Esophagus muscularis mucosa (tissue), 4 donors: ENCODE measurements at regions of chr11 and their contacts with region 1.

Region 1: DNA sequence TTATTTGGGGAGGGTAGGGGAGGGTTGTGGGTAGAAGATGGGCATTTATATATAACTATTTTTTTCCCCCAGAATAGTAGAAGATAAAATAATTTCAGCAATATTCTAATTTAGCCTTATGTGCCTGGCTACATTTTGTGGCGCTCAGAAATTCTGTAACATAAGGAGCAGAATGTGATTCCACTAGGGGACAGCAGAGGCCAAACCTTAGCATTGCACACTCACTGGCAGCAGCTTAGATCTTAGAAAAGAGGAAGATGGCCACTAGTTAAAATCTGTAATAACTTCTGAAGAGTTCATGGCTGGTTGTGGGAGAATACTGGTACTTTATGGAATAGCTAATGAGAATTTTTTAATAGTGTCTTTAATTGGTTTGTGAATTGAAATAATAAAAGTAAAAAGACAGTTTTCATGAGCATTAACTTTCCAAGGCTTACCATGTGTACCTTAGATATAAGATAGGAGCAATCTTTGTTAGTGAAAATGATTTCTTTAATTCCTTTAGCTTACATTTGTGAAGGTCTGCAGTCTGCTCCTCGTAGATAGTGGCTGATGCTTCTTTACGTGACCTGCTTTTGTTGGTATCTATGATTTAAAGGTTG is 33.1 kb downstream of the DDX10 start:
- DNase-seq: no peak
- H3K4me3 ChIP-seq: no peak overlapping the region
- H3K27ac ChIP-seq: no peak overlapping the region
- H3K4me1 ChIP-seq: no peaks in the 10 kb centered on the region
- H3K27me3 ChIP-seq: no peaks in the 10 kb centered on the region
- CTCF ChIP-seq: peak; percentile 79 to 85 (median 85)
- EP300 ChIP-seq: no peak
- POLR2A ChIP-seq: no peak

Region 2: DNA sequence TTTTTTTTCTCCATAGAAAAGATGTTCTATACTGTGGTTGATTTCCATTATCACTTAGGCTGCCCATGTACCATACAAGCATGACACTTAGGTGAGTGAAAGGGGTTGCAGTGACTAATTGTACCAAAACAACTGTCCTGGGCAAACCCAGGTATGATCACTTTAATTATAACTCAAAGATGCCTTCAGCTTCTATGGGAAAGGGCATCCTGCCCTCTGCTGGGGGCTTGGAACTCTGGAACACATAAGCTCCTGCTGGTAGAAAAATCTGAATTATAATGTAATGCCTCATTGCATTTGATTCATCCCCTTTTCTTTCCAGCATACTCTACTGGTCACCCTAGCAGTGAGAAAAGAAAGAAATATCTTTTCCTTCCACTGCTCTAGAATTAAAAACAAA is 173.2 kb after region 1 on chr11:
- intact Hi-C with region 1: loop called (anchors 10 kb)
- DNase-seq: no peak
- H3K4me3 ChIP-seq: no peak overlapping the region
- H3K27ac ChIP-seq: no peak overlapping the region
- H3K4me1 ChIP-seq: peaks cover 5 to 19% (median 16%) of the 10 kb centered on the region in 4 donors
- H3K27me3 ChIP-seq: no peaks in the 10 kb centered on the region
- CTCF ChIP-seq: peak; percentile 36 to 48 (median 42)
- EP300 ChIP-seq: no peak
- POLR2A ChIP-seq: no peak

Region 3: DNA sequence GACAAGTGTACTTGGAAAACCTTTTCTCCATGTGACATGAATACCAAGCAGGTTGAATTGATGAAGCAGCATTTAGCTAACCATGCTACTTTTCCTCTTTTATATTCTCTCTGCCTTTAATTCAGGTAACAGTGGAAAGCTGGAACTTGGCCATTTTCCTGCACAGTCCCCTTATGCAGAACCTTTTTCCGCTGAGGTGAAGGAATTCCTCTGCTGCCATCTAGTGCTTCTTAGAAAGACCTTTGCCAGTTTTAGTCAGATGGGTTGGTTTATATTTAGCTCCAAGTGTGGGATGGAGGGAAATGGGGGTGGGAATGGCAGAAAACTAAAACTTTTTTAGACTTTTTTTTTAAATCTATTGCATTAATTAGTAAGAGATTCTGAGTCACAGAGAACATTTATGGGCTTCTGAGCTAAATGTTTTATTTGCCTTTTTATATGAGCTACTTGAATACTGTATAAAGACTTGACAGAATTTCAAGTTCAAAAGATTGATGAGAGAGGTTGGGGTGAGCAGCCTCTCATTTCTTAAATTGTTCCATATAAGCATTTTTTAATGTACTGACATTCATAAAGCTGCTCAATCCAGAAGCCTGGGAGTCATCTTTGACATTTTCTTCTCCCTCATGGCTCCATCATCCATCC is 1241.3 kb after region 1 on chr11:
- intact Hi-C with region 1: loop called (anchors 5 kb)
- DNase-seq: no peak
- H3K4me3 ChIP-seq: no peak overlapping the region
- H3K27ac ChIP-seq: no peak overlapping the region
- H3K4me1 ChIP-seq: peaks cover 0 to 4% (median 0%) of the 10 kb centered on the region in 4 donors
- H3K27me3 ChIP-seq: no peaks in the 10 kb centered on the region
- CTCF ChIP-seq: peak; percentile 39 to 63 (median 55)
- EP300 ChIP-seq: no peak
- POLR2A ChIP-seq: no peak